Common myeloid progenitor, CD34-positive (primary cell): ENCODE measurements at regions of chr12 and their contacts with region 1.

Region 1: DNA sequence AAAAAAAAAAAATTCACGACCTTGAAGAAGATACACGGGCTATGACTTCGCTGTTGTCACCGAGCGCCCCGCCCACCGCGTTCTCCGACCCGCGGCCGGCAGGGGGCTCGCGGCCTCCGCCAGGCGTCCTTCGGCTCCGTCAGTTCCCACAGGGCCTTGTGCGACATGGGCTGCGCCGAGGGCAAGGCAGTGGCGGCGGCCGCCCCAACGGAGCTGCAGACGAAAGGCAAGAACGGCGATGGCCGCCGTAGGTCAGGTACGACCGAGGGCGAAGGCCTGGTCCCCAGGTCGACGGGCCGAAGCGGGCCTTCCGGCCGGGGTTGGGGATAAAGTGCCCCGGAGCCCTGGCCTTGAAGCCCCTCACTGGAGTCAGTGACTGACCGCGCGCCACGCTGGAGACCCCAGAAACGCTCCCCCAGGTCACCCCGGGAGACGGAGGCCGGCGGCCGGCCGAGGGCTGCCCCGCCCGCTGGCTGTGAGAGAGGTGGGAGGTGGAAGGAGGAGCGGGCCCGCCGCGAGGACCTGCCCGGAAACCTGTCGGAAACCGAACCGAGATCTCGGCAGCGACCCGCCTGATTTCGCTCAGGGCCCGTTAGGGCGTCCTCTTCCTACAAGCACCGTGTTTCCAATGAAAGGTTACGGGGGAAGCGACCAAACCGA is at the start of gene TXNRD1:
- DNase-seq: peak; percentile 87 to 94 (median 93)
- H3K4me3 ChIP-seq: peak within 1 kb of the TSS; percentile 44 to 80 (median 72)
- H3K27ac ChIP-seq: peak within 1 kb of the TSS in 1 of 2 experiments; percentile 25
- H3K4me1 ChIP-seq: peaks cover 3 to 23% (median 15%) of the 10 kb centered on the region in 4 experiments
- H3K27me3 ChIP-seq: no peaks in the 10 kb centered on the region

Region 2: GRCh38 chr12:104064031-104064822 is 151.5 kb before region 1 on chr12 and contains the start of gene HCFC2:
- CTCF ChIA-PET with region 1: no interaction called
- POLR2A ChIA-PET with region 1: no interaction called
- DNase-seq: peak; percentile 85 to 91 (median 89)
- H3K4me3 ChIP-seq: peak within 1 kb of the TSS; percentile 83 to 98 (median 89)
- H3K27ac ChIP-seq: peak within 1 kb of the TSS; percentile 25 to 74
- H3K4me1 ChIP-seq: peaks cover 3 to 29% (median 15%) of the 10 kb centered on the region in 4 experiments
- H3K27me3 ChIP-seq: peaks cover 0 to 7% (median 0%) of the 10 kb centered on the region in 5 experiments

Region 3: DNA sequence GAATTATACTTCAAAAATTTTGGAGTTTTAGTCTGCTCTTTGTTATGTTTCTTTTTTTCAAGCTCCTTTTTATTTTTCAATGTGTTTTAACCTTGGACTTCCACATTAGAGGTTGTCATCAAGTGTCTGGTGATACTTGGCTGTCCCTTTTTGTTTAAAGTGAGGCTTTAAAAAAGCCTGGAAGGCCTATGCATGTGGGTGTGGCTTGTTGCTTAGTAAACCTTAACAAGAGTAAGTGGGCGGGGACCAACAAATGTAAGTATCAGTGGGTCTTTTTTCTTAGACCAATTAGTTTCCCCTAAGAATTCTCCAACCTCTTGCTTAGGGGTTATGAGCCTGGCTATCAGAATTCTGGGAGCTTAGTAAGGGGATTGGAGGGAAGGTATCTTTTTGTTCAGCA is 125.1 kb before region 1 on chr12:
- CTCF ChIA-PET with region 1: no interaction called
- POLR2A ChIA-PET with region 1: no interaction called
- DNase-seq: no peak
- H3K4me3 ChIP-seq: no peak overlapping the region
- H3K27ac ChIP-seq: no peak overlapping the region
- H3K4me1 ChIP-seq: no peaks in the 10 kb centered on the region
- H3K27me3 ChIP-seq: no peaks in the 10 kb centered on the region

Region 4: DNA sequence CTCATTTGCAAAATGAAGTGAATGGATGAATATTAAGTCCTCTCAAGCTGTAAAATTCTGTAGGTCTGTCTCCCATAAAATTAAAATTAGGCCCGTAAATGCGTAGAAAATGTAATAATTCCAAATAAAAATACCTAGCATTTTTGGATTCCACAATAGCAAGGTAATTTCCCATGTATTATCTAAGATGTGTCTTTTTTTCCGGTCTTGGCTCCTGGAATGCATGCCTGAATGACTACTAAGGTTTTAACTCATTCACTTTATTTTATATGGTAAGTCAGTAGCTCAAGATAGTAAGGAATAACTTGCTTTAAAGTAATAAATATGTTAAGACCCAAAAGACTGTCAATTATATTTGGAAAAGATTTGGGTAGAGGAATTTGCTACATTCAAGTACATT is 10.9 kb after region 1 on chr12:
- CTCF ChIA-PET with region 1: interaction called, 11 read pairs
- POLR2A ChIA-PET with region 1: no interaction called
- DNase-seq: no peak
- H3K4me3 ChIP-seq: no peak overlapping the region
- H3K27ac ChIP-seq: no peak overlapping the region
- H3K4me1 ChIP-seq: no peaks in the 10 kb centered on the region
- H3K27me3 ChIP-seq: peaks cover 0 to 2% (median 0%) of the 10 kb centered on the region in 5 experiments

Region 5: DNA sequence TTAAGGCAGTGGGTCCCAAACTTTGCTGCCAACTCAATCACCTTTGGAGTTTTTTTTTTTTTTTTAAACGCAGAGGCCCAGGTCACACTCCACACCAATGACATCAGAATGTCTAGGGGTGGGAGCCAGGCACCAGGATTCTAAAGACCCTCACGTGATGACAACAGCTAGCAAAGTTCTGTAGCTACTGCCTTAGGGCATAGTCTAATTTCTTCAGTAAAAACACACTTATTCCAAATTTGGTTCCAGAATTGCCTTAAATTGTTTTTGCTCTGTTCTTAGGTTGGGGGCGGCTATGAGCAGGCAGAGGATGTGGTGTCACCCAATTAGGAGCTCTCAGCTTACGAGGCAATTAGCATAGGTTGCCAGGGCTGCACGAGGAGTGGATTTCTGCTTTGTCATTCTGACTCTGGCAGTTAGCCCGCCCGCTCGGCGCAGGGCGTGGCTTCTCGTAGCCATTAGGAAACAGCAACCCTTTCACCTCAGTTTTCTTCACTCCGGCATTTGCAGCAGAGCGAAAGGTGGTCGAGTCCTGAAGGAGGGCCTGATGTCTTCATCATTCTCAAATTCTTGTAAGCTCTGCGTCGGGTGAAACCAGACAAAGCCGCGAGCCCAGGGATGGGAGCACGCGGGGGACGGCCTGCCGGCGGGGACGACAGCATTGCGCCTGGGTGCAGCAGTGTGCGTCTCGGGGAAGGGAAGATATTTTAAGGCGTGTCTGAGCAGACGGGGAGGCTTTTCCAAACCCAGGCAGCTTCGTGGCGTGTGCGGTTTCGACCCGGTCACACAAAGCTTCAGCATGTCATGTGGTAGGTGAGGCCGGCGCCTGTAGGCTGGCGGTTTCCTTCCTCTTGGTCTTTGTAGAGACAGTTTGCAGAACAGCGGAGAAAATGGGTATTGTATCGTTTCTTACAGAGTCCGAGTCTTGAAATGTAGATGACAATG is 71.0 kb after region 1 on chr12:
- CTCF ChIA-PET with region 1: interaction called, 10 read pairs
- POLR2A ChIA-PET with region 1: interaction called, 11 read pairs
- DNase-seq: peak; percentile 97 to 99 (median 99)
- H3K4me3 ChIP-seq: peak overlapping the region; percentile 76 to 95 (median 87)
- H3K27ac ChIP-seq: peak overlapping the region; percentile 96 to 98
- H3K4me1 ChIP-seq: peaks cover 28 to 39% (median 31%) of the 10 kb centered on the region in 4 experiments
- H3K27me3 ChIP-seq: no peaks in the 10 kb centered on the region

Region 6: GRCh38 chr12:104294845-104295688 is 79.3 kb after region 1 on chr12:
- CTCF ChIA-PET with region 1: interaction called, 14 read pairs
- POLR2A ChIA-PET with region 1: interaction called, 5 read pairs
- DNase-seq: no peak
- H3K4me3 ChIP-seq: no peak overlapping the region
- H3K27ac ChIP-seq: no peak overlapping the region
- H3K4me1 ChIP-seq: peaks cover 0 to 4% (median 2%) of the 10 kb centered on the region in 4 experiments
- H3K27me3 ChIP-seq: no peaks in the 10 kb centered on the region